Posterior cingulate gyrus (tissue), 11 donors: ENCODE measurements at regions of chr1 and their contacts with region 1.

Region 1: GRCh38 chr1:151839457-151840405 is at the start of gene C2CD4D:
- DNase-seq: peak; percentile 65 to 97 (median 82)

Region 2: DNA sequence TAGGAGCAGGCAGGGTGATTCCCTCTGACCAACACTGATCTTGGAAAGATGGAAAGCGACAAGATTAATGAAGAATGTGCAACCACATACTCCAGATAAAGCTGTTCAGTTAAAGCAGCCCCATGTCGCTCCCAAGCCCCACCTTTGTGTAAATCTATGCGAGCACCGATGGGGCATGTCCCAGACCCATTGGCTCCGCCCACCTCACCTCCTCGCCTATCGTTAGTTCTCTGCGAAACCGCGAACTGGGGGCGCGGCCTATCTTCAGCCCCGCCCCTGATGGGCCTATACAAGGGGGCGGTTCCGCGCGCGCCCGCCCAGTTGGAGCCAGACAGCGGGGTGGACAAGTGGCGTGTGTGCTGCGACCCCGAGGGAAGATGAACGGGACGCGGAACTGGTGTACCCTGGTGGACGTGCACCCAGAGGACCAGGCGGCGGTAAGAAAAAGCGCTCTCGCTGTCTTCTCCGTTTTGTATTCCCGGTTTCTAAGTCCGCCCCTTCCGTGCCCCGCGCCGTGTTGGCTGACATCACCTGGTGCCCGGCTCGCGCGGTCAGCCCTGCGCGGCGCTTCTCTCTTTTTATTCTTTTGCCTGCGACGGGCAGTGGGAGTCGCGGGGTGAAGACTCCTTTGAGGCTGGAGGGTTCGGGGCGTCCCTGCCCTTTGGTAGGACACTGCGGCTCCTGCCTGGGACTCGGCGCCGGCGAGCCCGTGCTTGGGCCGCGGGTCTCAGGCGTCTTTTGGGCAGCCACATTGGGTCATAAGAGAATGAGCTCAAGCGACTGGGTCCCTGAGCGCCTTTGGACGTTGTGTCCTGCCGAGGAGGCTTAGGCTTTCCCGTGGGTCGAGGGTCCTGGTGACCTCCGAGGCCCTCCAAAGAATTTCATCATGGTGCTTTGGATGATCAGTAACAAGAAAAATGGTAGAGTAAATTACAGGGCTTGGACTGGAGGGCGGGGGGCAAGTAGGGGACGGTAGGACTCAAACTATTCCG is 299.4 kb before region 1 on chr1 and contains the start of gene TUFT1:
- intact Hi-C with region 1: loop called (anchors 10 kb)
- DNase-seq: peak; percentile 79 to 99 (median 91)

Region 3: GRCh38 chr1:151762941-151763921 is 76.5 kb before region 1 on chr1 and contains the start of gene MRPL9:
- intact Hi-C with region 1: loop called (anchors 10 kb)
- DNase-seq: peak; percentile 78 to 97 (median 85)

Region 4: DNA sequence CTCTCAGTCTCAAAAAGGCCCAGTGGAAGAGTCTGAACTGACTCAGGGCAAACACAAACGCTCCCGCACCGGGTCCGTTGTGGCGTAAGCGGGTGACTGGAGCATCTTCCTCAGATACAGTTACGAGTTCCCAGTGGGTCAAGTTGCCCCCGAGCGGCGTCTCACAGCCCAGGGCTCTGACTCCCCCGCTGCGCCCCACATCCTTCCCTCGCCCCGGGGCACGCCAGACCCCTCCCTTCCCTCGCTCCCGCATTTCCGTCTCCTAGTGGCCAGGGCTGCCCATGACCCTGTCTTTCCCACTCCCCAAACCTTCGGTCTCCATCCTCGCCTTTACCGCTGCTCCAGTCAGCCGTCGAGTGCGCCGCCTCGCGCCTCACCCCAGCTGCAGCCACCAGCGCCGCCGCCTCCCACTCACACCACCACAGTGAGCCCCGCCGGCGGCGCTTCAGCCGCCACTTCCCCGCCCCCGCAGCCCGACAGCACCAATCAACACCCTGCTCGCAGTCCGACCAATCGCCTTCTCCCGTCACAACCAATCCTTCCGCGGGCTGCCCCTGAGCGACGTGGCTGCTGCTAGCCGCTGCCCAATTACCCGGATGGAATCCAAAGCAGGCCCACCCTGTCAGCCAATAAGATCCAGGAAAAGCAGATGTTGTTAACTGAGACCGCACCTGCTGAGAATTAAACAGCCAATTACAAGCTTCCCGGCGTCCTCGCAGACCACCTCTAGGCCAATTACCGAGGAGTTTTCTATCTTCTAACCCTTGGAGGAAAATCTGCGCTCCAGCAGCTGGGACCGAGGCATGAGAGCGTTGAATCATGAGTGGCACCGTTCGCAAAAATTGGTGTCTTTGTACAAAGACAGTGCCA is 49.4 kb before region 1 on chr1 and contains the start of gene TDRKH:
- intact Hi-C with region 1: loop called (anchors 1 kb)
- DNase-seq: peak; percentile 96 to 100 (median 98)

Region 5: GRCh38 chr1:151820940-151821339 is 18.8 kb before region 1 on chr1:
- intact Hi-C with region 1: no loop called
- DNase-seq: peak in 1 of 10 donors; percentile 28

Region 6: DNA sequence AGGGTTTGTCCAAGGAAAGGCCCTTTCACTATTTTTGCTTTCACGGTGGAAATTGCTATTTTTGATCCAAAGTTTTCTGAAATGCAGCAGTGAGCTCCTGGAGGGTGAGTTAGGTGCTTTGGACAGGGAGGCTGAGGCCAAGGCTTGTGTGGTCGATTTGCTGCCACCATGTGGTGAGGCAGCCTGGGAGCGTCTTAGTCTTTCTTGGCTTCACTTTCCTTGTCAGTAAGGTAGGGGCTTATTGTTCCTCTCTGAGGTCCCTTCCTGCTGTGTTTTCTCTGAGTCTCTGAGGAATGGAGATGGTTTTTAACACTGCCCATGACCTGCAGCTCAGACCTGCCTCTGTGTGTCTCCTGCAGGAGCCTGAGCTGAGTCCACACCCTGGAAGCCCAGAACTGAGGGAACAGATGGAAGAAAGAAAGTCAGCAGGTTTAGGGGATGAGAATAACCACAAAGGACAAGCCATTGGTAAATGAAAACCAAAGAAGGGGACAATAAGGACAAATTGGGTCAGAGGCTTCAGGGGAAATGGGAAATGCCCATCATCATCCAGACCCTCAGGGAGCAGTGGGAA is 174.0 kb after region 1 on chr1:
- intact Hi-C with region 1: no loop called
- DNase-seq: peak in 2 of 10 donors; percentile 25 to 81